Activated naive CD4-positive, alpha-beta T cell treated with anti-CD3 and anti-CD28 coated beads for 36 hours (primary cell): ENCODE measurements at regions of chr4 and their contacts with region 1.

Region 1: GRCh38 chr4:38099908-38100407 is 139.8 kb downstream of the PTTG2 start:
- DNase-seq: no peak
- H3K4me3 Mint-ChIP-seq: no peak overlapping the region
- H3K27ac Mint-ChIP-seq: no peak overlapping the region
- H3K4me1 Mint-ChIP-seq: no peaks in the 10 kb centered on the region
- H3K27me3 Mint-ChIP-seq: no peaks in the 10 kb centered on the region

Region 2: DNA sequence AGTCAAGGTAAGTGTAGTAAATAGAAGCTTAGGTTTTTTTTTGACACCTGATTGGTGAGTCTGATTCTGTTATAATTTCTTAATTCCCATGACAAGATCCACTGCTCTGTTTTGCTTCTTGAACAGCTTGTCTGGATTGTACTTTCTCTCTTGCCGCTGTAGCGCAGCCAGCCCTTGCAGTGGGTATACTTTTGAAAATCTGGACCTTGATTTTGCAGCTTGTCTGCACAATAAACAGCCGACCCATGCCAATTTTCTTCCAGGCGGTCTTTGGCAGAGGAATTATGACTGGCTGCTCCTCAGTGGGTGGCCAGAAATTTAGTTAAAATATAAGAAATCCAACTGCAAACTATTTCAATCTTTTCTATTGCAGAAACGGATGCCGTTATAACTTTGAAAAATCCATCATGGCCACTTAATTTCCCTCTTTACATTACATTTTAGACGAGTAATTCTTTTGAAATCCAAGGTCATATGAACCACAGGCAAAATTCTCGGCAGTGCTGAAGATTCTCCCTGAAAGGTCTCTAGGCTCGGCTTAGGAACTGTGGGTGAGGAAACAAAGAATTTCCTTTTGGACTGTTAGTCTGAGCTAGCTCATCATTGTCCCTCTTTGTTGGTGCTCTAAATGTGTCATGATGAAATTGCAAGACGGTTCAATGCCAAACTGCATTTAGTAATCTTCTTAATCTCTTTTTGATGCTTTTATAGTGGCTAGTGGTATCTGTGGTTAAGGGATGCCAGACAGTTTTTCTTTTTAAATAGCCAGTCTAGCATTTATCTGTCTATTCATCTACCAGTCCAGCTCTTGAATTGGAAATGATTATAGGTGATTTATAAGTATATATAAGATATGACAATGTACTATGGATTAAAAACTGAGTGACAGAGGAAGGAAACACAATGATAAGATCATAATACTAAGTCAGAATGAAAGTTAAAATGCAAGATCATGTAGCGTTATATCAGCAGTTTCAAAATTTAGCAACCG is 171.2 kb before region 1 on chr4:
- CTCF ChIA-PET with region 1: no interaction called
- intact Hi-C with region 1: no loop called
- DNase-seq: no peak
- H3K4me3 Mint-ChIP-seq: no peak overlapping the region
- H3K27ac Mint-ChIP-seq: no peak overlapping the region
- H3K4me1 Mint-ChIP-seq: peaks cover 25% of the 10 kb centered on the region
- H3K27me3 Mint-ChIP-seq: no peaks in the 10 kb centered on the region

Region 3: GRCh38 chr4:38114386-38115150 is 14.6 kb after region 1 on chr4:
- CTCF ChIA-PET with region 1: no interaction called
- intact Hi-C with region 1: loop called (anchors 2 kb)
- DNase-seq: no peak
- H3K4me3 Mint-ChIP-seq: no peak overlapping the region
- H3K27ac Mint-ChIP-seq: no peak overlapping the region
- H3K4me1 Mint-ChIP-seq: no peaks in the 10 kb centered on the region
- H3K27me3 Mint-ChIP-seq: no peaks in the 10 kb centered on the region

Region 4: GRCh38 chr4:38125816-38126215 is 25.9 kb after region 1 on chr4:
- CTCF ChIA-PET with region 1: no interaction called
- intact Hi-C with region 1: loop called (anchors 2 kb)
- DNase-seq: no peak
- H3K4me3 Mint-ChIP-seq: no peak overlapping the region
- H3K27ac Mint-ChIP-seq: no peak overlapping the region
- H3K4me1 Mint-ChIP-seq: peaks cover 36% of the 10 kb centered on the region
- H3K27me3 Mint-ChIP-seq: no peaks in the 10 kb centered on the region